Naive thymus-derived CD4-positive, alpha-beta T cell (primary cell): ENCODE measurements at regions of chr19 and their contacts with region 1.

Region 1: DNA sequence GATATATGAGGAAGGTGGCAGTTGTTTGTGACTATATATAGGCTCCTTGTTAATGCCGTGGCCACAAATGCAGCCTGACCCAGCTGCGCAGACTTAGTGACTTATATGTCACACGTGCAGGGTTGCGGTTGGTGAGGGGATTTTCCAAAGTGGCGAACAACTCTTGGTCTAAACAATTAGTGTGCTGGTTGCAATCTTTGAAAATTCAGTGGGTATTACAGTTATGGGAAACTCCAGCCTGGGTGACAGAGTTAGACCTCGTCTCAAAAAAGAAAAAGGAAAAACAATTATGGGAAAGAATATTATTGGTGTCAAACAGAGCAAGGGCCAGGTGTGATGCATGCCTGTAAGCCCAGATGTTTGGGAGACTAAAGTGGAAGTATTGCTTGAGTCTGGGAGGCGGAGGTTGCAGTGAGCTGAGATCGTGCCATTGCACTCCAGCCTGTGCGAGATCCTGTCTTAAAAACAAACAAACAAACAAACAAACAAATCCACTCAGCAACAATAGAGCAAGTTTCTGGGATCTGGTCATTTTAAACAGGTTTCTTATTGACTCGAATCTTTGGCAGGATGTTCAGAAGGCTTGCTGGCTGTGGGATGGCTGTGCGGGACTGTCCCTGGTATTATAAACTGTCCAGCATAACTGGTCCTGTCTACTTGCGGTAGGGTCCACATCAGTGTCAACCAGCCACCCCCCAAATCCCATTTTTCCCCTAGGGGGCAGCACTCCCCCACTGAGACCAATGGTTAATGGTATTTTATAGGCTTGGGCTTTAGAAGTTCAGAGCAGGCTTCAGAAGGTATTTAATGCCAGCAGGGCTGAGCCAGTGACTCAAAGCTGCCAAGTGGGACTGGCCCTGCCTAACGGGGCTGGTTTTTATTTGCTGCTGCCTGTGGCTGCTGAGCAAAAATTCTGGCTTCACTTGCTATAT is 15.4 kb downstream of the RELB start:
- DNase-seq: peak; percentile 28 to 75 (median 61)
- ATAC-seq: peak; percentile 81
- H3K4me3 ChIP-seq: peak overlapping the region; percentile 4
- H3K4me3 Mint-ChIP-seq: peak overlapping the region in 1 of 10 donors; percentile 25
- H3K27ac ChIP-seq: peak overlapping the region; percentile 40
- H3K27ac Mint-ChIP-seq: peak overlapping the region; percentile 23 to 89 (median 54)
- H3K4me1 ChIP-seq: peaks cover 0 to 11% of the 10 kb centered on the region in 2 donors
- H3K4me1 Mint-ChIP-seq: peaks cover 0 to 9% (median 0%) of the 10 kb centered on the region in 7 donors
- H3K27me3 ChIP-seq: no peaks in the 10 kb centered on the region
- H3K27me3 Mint-ChIP-seq: no peaks in the 10 kb centered on the region

Region 2: GRCh38 chr19:44988896-44989556 is 27.6 kb before region 1 on chr19:
- CTCF ChIA-PET with region 1: no interaction called
- POLR2A ChIA-PET with region 1: no interaction called
- intact Hi-C with region 1: no loop called
- DNase-seq: peak; percentile 34 to 64 (median 55)
- ATAC-seq: peak; percentile 86
- H3K4me3 ChIP-seq: no peak overlapping the region
- H3K4me3 Mint-ChIP-seq: no peak overlapping the region
- H3K27ac ChIP-seq: no peak overlapping the region
- H3K27ac Mint-ChIP-seq: peak overlapping the region in 2 of 9 donors; percentile 41 to 85
- H3K4me1 ChIP-seq: no peaks in the 10 kb centered on the region
- H3K4me1 Mint-ChIP-seq: peaks cover 0 to 2% (median 0%) of the 10 kb centered on the region in 7 donors
- H3K27me3 ChIP-seq: no peaks in the 10 kb centered on the region
- H3K27me3 Mint-ChIP-seq: no peaks in the 10 kb centered on the region

Region 3: DNA sequence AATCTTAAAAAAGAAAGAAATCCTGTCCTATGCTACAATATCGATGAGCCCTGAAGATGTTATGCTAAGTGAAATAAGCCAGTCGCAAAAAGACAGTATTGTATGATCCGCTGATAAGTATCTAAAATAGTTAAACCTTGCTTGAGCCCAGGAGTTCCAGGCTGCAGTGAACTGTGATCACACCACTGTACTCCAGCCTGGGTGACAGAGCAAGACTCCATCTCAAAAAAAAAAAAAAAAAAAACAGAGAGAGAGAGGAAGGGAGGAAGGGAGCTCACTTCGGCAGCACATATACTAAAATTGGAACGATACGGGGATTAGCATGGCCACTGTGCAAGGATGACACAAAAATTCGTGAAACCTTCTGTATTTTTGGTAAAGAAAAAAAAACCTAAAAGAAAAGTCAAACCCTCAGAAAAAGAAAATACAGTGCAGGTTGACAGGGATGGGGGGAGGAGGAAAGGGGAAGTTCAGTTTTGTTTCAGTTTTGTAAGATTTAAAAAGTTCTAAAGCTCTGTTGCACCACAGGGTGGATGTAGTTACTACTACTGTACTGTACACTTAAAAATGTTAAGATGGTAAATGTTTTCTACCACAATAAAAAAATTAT is 30.6 kb after region 1 on chr19:
- CTCF ChIA-PET with region 1: no interaction called
- POLR2A ChIA-PET with region 1: interaction called, 4 read pairs
- intact Hi-C with region 1: loop called in 1 of 2 experiments (anchors 2 kb)
- DNase-seq: peak in 3 of 9 donors; percentile 9 to 19 (median 18)
- ATAC-seq: peak; percentile 85
- H3K4me3 ChIP-seq: no peak overlapping the region
- H3K4me3 Mint-ChIP-seq: peak overlapping the region in 8 of 10 donors; percentile 3 to 73 (median 50)
- H3K27ac ChIP-seq: peak overlapping the region; percentile 6
- H3K27ac Mint-ChIP-seq: peak overlapping the region; percentile 45 to 81 (median 69)
- H3K4me1 ChIP-seq: peaks cover 3 to 12% of the 10 kb centered on the region in 2 donors
- H3K4me1 Mint-ChIP-seq: peaks cover 39 to 54% (median 43%) of the 10 kb centered on the region in 7 donors
- H3K27me3 ChIP-seq: no peaks in the 10 kb centered on the region
- H3K27me3 Mint-ChIP-seq: no peaks in the 10 kb centered on the region

Region 4: DNA sequence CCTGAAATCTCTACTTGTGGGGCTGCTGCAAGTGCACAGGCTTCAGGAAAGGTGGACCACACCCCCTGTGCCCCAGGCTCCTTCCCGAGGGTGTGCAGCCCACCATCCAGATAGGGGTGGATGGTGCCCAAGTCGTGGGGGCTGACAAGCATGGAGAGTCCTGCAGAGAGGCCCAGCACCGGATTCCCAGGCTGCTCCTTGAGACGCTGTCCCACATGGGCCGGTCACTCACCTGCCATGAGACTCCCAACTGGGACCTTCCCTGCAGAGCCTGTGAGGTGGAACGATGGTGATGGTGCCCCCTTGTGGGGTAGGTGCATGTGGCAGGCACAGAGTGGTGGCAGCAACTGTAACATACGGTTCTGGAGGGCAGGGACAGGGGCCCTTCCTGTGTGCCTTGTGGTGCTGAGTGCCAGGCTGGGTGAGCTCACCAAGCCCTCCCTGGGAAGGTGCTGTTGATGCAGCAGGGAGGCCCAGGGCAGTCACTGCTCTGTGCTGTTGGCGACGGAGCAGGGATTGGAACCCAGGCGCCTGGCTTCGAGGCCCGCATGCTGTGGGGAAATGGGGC is 109.4 kb after region 1 on chr19:
- CTCF ChIA-PET with region 1: no interaction called
- POLR2A ChIA-PET with region 1: no interaction called
- intact Hi-C with region 1: no loop called
- DNase-seq: peak; percentile 37 to 74 (median 58)
- ATAC-seq: peak; percentile 93
- H3K4me3 ChIP-seq: no peak overlapping the region
- H3K4me3 Mint-ChIP-seq: no peak overlapping the region
- H3K27ac ChIP-seq: no peak overlapping the region
- H3K27ac Mint-ChIP-seq: no peak overlapping the region
- H3K4me1 ChIP-seq: peaks cover 4 to 10% of the 10 kb centered on the region in 2 donors
- H3K4me1 Mint-ChIP-seq: peaks cover 13 to 40% (median 27%) of the 10 kb centered on the region in 7 donors
- H3K27me3 ChIP-seq: no peaks in the 10 kb centered on the region
- H3K27me3 Mint-ChIP-seq: no peaks in the 10 kb centered on the region